Colonic mucosa (tissue), 4 donors: ENCODE measurements at regions of chr4 and their contacts with region 1.

Region 1: GRCh38 chr4:42519803-42520417 is 122.6 kb downstream of the SHISA3 start:
- DNase-seq: peak; percentile 54
- H3K4me3 ChIP-seq: no peak overlapping the region
- H3K27ac ChIP-seq: no peak overlapping the region
- H3K4me1 ChIP-seq: no peaks in the 10 kb centered on the region
- H3K27me3 ChIP-seq: no peaks in the 10 kb centered on the region
- CTCF ChIP-seq: peak; percentile 43

Region 2: GRCh38 chr4:41957634-41958033 is 562.3 kb before region 1 on chr4:
- intact Hi-C with region 1: no loop called
- DNase-seq: no peak
- H3K4me3 ChIP-seq: no peak overlapping the region
- H3K27ac ChIP-seq: no peak overlapping the region
- H3K4me1 ChIP-seq: no peaks in the 10 kb centered on the region
- H3K27me3 ChIP-seq: no peaks in the 10 kb centered on the region
- CTCF ChIP-seq: no peak

Region 3: DNA sequence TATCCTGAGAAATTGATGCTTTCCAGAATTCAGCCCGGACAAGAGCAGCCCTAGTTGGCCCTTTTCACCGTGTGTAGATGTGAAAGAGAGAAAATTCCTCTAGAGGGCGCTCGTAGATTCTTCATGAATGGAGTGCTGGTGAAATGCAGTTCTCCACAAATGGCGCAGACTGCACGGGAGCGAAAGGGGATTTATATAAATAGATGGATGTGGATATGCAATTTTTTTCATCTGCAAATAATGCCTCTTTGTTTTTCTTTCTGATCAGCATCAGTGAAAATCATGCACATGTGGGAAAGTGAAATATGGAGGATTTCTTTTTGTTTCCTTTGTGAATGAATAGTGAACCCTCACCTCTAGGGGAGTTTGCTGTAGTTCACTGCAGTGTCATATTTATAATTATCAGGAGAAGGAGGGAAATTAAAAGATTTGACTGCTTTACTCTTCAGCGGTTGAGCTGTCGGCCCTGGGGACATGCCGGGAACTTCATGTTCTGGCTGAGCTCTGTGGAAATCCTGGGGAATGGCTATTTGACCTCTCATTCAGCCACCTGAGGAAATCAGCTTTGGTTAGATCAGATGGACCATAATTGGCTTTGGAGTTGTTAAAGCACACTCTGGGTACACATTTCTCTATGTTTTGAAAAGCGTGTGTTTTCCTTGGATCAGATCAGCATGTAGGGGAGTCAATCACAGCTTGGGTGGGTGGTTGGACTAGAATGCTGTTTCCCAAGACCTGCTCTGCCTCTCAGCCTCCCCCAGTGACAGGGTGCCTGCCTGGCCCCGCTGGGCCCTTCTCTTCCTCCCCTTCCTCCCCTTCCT is 237.6 kb before region 1 on chr4:
- intact Hi-C with region 1: loop called (anchors 2 kb)
- DNase-seq: peak; percentile 59
- H3K4me3 ChIP-seq: no peak overlapping the region
- H3K27ac ChIP-seq: no peak overlapping the region
- H3K4me1 ChIP-seq: no peaks in the 10 kb centered on the region
- H3K27me3 ChIP-seq: no peaks in the 10 kb centered on the region
- CTCF ChIP-seq: peak; percentile 61

Region 4: GRCh38 chr4:42293967-42294822 is 225.7 kb before region 1 on chr4:
- intact Hi-C with region 1: no loop called
- DNase-seq: no peak
- H3K4me3 ChIP-seq: no peak overlapping the region
- H3K27ac ChIP-seq: no peak overlapping the region
- H3K4me1 ChIP-seq: no peaks in the 10 kb centered on the region
- H3K27me3 ChIP-seq: no peaks in the 10 kb centered on the region
- CTCF ChIP-seq: no peak

Region 5: DNA sequence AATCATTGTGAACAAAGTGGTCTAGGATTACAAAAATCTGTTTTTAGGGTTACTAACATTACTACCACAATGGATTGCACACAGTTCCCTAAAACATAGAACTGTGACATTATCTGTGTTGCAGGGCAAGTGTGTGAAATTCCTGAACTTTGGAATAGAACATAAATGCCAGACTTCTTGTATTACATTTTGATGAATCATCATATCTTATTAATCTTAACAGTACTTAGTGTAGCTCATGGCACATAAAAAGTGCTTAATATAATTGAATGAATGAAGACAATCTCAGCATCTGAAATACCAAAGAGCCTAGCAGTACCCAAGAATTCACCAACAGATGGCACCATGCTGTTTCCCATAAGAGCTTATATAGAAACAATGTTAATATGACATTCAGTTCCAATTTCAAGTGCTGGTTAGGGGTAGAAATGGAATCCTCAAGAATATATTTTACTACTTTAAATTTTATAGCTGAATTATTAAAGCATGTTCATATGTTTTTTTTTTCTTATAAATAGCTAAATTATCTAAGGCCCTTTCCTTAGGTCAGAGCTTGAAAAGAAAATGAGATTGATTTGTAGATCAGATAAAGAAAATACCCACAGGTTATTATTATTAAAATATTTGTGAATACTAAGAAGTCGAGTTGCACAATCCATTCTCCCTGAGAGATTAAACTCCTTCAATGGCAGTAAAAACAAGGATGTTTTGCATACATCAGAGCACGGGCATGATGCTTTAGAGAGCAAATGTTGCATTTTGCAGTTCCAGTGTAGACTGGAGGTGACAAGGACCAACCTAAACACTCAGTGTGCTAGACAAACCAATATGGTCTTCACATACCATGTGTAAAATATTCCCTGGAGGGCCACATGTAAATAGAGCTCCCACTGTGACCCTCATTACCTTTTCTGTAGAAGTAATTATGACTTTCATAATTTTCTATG is 148.3 kb before region 1 on chr4:
- intact Hi-C with region 1: loop called (anchors 5 kb)
- DNase-seq: no peak
- H3K4me3 ChIP-seq: no peak overlapping the region
- H3K27ac ChIP-seq: no peak overlapping the region
- H3K4me1 ChIP-seq: no peaks in the 10 kb centered on the region
- H3K27me3 ChIP-seq: no peaks in the 10 kb centered on the region
- CTCF ChIP-seq: peak; percentile 50

Region 6: DNA sequence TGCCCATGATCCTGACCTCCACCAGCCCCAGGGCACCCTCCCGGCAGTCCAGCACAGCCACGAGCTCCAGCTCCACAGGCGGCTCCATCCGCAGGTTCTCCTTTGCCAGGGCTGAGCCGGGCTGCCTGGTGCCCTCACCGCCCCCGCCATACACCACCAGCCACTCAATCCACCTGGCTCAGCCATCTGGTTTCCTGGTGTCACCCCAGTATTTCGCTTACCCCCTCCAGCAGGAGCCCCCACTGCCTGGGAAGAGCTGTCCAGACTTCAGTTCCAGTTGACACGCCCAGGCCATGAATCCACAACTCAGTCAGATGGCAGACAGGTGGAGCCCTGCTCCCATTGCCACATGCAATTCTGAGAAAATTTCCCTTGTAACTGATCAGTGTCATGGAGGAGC is 118.7 kb before region 1 on chr4:
- intact Hi-C with region 1: loop called (anchors 10 kb)
- DNase-seq: no peak
- H3K4me3 ChIP-seq: no peak overlapping the region
- H3K27ac ChIP-seq: no peak overlapping the region
- H3K4me1 ChIP-seq: peaks cover 13% of the 10 kb centered on the region
- H3K27me3 ChIP-seq: peaks cover 44% of the 10 kb centered on the region
- CTCF ChIP-seq: no peak

Region 7: GRCh38 chr4:42678512-42678911 is 158.6 kb after region 1 on chr4:
- intact Hi-C with region 1: no loop called
- DNase-seq: no peak
- H3K4me3 ChIP-seq: no peak overlapping the region
- H3K27ac ChIP-seq: no peak overlapping the region
- H3K4me1 ChIP-seq: no peaks in the 10 kb centered on the region
- H3K27me3 ChIP-seq: no peaks in the 10 kb centered on the region
- CTCF ChIP-seq: no peak